GM12878 (cell line): ENCODE measurements at regions of chr4 and their contacts with region 1.

Region 1: GRCh38 chr4:87006676-87007527 is 72.1 kb downstream of the AFF1 start:
- DNase-seq: peak; percentile 71
- ATAC-seq: peak; percentile 82
- H3K4me3 ChIP-seq: peak overlapping the region; percentile 78
- H3K27ac ChIP-seq: peak overlapping the region; percentile 93
- H3K4me1 ChIP-seq: peaks cover 17% of the 10 kb centered on the region
- H3K27me3 ChIP-seq: no peaks in the 10 kb centered on the region
- CTCF ChIP-seq: peak in 2 of 3 experiments; percentile 33 to 34; a peak in 3 of 6 replicates
- EP300 ChIP-seq: 0 out of 4 replicates have a peak, but pooled peaks of 1 of the 2 experiments have one; percentile 17
- POLR2A ChIP-seq: peak; percentile 97
- RAD21 ChIP-seq: no peak

Region 2: DNA sequence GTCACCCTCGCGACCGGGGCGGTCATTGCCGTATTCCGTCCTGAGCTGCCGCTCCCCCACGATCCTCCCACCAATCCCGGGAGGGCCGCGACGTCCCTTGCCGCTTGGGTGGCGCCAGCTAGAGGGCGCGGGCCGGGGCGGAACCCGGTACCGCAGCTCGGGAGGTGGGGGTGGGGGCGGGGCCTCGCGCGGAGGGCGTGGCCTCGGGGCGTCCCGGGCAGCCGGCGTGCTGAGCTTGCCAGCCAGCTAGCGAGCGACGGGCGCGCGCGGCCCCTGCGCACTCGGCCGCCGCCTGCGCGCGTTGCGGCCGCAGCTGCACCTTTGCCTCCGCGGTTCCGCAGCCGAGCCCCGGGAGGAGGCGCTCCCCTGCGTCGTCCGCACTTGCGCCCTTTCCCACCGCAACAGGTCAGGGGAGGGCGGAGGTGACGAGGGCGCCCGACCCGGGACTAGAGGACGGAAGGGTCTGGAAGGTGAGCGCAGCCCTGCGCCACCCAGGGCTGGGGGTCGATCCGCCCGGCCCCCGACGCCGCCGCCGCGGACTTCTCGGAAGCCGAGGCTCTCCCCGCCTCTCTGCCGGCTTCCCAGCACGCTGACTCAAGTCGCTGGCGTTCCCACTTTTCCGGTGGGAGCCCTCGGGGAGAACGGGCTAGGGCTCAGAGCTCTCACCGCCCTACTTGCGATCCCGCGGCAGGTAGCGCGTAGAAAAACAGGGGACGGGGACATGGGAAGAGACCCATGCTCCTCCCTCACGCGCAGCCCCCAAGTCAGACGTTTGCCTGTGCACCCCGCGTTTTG is 71.9 kb before region 1 on chr4 and contains the start of gene AFF1:
- CTCF ChIA-PET with region 1: interaction called, 38 read pairs
- POLR2A ChIA-PET with region 1: interaction called, 123 read pairs
- RAD21 ChIA-PET with region 1: interaction called, 267 read pairs
- SMC1A ChIA-PET with region 1: interaction called, 268 read pairs
- in situ Hi-C with region 1: loop called (anchors 5 kb)
- intact Hi-C with region 1: loop called (anchors 1 kb)
- DNase-seq: peak; percentile 71
- ATAC-seq: peak; percentile 72
- H3K4me3 ChIP-seq: peak within 1 kb of the TSS; percentile 91
- H3K27ac ChIP-seq: peak within 1 kb of the TSS; percentile 93
- H3K4me1 ChIP-seq: peaks cover 3% of the 10 kb centered on the region; the same call in 1 of the 2 replicates
- H3K27me3 ChIP-seq: no peaks in the 10 kb centered on the region
- CTCF ChIP-seq: peak in 2 of 3 experiments; percentile 30 to 32; a peak in 4 of 6 replicates
- EP300 ChIP-seq: no peak
- POLR2A ChIP-seq: peak; percentile 96
- RAD21 ChIP-seq: peak; percentile 17; the same call in 1 of the 2 replicates
- polyA plus RNA-seq, gene AFF1: 3.5 to 11.4 TPM

Region 3: DNA sequence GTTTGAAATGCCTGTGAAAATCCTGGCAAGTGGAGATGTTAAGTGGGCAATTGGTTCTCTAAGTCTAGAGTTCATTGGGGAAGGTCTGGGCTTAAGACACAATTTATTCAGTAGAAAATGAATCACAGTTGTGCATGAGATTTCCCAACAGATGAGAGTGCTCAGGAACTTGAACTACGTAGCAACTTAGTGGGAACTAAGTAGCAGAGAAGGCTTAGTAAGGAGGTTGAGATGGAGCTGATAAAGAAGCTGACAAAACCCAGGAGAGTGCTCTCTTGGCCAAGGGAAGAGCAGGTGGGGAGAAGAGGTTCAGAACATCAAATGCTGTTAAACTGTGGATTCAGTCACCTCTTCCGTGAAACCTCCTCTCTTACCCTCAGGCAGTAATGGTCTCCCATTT is 39.1 kb before region 1 on chr4:
- CTCF ChIA-PET with region 1: interaction called, 3 read pairs
- POLR2A ChIA-PET with region 1: interaction called, 13 read pairs
- RAD21 ChIA-PET with region 1: interaction called, 22 read pairs
- SMC1A ChIA-PET with region 1: interaction called, 107 read pairs
- in situ Hi-C with region 1: no loop called
- intact Hi-C with region 1: no loop called
- DNase-seq: no peak
- ATAC-seq: no peak
- H3K4me3 ChIP-seq: no peak overlapping the region
- H3K27ac ChIP-seq: no peak overlapping the region
- H3K4me1 ChIP-seq: peaks cover 39% of the 10 kb centered on the region
- H3K27me3 ChIP-seq: no peaks in the 10 kb centered on the region
- CTCF ChIP-seq: no peak
- EP300 ChIP-seq: no peak
- POLR2A ChIP-seq: no peak
- RAD21 ChIP-seq: no peak

Region 4: DNA sequence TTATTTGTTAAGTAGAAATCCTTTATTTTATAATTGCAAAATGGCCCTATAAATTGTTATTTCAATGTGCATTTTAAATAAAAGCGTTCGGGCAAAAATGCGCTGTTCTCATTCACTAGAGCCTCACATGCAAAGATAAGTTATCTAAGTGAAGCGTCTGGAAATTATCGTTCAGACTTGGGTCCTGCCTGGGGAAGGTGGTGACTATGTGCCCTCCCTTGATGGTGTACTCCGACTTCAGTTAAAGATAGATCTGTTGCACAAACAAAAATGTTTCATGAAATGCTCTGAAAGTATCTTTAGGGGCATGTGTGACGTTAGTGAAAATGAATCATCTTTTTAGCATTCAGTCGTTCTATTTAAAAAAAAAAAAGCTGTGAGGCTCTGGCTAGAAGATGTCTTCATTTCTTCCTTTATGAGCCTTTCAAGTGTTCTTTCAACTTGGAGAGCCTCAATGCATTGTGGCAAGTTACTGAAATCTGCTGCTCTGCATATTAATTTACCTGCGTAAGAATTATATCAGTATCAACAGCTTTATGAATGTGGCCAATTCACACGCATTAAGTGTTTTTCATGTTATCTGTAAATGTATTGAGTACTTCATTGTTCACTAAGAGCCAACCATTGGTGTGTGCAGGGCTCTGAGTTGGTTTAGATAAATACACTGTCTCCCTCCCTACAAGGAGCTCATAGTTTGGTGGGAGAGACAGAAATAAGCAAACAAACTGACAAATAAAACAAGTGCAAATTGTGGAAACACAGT is 10.9 kb after region 1 on chr4:
- CTCF ChIA-PET with region 1: interaction called, 7 read pairs
- POLR2A ChIA-PET with region 1: interaction called, 18 read pairs
- RAD21 ChIA-PET with region 1: interaction called, 13 read pairs
- SMC1A ChIA-PET with region 1: interaction called, 26 read pairs
- in situ Hi-C with region 1: no loop called
- intact Hi-C with region 1: no loop called
- DNase-seq: no peak
- ATAC-seq: no peak
- H3K4me3 ChIP-seq: no peak overlapping the region
- H3K27ac ChIP-seq: peak overlapping the region; percentile 78; the same call in 1 of the 2 replicates
- H3K4me1 ChIP-seq: peaks cover 46% of the 10 kb centered on the region
- H3K27me3 ChIP-seq: no peaks in the 10 kb centered on the region
- CTCF ChIP-seq: no peak
- EP300 ChIP-seq: no peak
- POLR2A ChIP-seq: no peak
- RAD21 ChIP-seq: no peak

Region 5: DNA sequence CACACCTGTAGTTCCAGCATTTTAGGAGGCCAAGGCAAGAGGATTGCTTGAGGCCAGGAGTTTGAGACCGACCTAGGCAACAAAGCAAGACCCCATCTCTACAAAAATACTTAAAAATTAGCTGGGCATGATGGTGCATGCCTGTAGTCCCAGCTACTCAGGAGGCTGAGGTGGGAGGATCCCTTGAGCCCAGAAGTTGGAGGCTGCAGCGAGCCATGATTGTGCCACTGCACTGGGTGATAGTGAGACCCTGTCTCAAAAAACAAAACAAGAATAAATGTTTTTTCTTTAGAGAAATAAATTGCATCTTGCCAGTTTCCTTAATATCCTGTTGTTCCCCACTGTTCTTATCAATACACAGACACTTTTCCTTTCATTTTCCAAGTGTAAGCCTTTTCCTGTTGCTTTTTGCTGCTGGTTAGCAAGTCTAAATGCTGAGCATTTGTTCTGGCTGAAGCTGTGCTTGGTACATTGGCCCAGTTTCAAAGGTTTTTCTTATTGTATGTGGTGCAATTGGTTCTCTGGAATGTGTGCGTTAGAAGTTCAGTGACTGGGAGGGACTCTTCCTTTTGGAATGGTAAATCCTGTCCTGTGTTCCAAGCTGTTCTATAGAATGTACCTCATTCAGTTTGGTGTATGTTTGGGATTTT is 26.1 kb after region 1 on chr4:
- CTCF ChIA-PET with region 1: interaction called, 4 read pairs
- POLR2A ChIA-PET with region 1: interaction called, 4 read pairs
- RAD21 ChIA-PET with region 1: interaction called, 13 read pairs
- SMC1A ChIA-PET with region 1: interaction called, 20 read pairs
- in situ Hi-C with region 1: no loop called
- intact Hi-C with region 1: no loop called
- DNase-seq: no peak
- ATAC-seq: no peak
- H3K4me3 ChIP-seq: no peak overlapping the region
- H3K27ac ChIP-seq: peak overlapping the region; percentile 11; the same call in 1 of the 2 replicates
- H3K4me1 ChIP-seq: peaks cover 52% of the 10 kb centered on the region
- H3K27me3 ChIP-seq: no peaks in the 10 kb centered on the region
- CTCF ChIP-seq: no peak
- EP300 ChIP-seq: no peak
- POLR2A ChIP-seq: no peak
- RAD21 ChIP-seq: no peak

Region 6: DNA sequence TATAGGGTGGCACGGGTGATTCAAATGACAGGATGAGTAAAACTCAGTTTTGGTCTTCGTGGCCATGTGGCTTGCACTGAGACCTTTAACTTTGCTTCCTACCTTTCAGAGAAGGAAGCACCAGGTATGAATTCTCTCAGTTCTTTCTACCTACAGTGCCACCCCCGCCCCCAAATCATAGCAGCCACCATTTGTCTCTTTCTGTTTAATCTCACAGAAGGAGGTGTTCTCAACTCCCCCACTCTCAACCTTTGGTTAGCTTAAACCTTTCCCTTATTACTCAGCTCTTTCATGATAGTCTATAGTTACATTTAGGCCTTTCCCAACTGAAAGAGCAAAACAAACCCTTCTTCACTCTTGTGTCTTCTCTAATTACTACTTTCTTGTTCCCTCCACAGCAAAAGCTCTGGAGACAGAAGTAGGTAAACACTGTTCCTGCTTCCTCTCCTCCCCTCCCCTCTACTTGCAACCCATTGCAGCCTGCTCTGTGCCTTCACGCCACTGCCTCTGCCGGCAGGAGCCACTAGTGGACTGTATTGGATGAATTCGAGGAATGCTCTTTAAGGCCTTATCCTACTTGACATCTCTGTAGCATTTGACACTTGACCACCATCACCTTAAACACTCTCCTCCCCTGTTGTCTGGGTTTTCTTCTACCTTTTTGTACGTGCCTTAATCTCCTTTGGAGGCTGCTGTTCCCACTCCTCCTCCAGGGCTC is 51.6 kb after region 1 on chr4:
- CTCF ChIA-PET with region 1: interaction called, 3 read pairs
- POLR2A ChIA-PET with region 1: interaction called, 8 read pairs
- RAD21 ChIA-PET with region 1: interaction called, 8 read pairs
- SMC1A ChIA-PET with region 1: interaction called, 34 read pairs
- in situ Hi-C with region 1: no loop called
- intact Hi-C with region 1: no loop called
- DNase-seq: no peak
- ATAC-seq: peak; percentile 56
- H3K4me3 ChIP-seq: no peak overlapping the region
- H3K27ac ChIP-seq: peak overlapping the region; percentile 4; the same call in 1 of the 2 replicates
- H3K4me1 ChIP-seq: peaks cover 37% of the 10 kb centered on the region
- H3K27me3 ChIP-seq: no peaks in the 10 kb centered on the region
- CTCF ChIP-seq: no peak; a peak in 1 of 6 replicates
- EP300 ChIP-seq: no peak
- POLR2A ChIP-seq: no peak
- RAD21 ChIP-seq: peak; percentile 43; the same call in 1 of the 2 replicates

Region 7: DNA sequence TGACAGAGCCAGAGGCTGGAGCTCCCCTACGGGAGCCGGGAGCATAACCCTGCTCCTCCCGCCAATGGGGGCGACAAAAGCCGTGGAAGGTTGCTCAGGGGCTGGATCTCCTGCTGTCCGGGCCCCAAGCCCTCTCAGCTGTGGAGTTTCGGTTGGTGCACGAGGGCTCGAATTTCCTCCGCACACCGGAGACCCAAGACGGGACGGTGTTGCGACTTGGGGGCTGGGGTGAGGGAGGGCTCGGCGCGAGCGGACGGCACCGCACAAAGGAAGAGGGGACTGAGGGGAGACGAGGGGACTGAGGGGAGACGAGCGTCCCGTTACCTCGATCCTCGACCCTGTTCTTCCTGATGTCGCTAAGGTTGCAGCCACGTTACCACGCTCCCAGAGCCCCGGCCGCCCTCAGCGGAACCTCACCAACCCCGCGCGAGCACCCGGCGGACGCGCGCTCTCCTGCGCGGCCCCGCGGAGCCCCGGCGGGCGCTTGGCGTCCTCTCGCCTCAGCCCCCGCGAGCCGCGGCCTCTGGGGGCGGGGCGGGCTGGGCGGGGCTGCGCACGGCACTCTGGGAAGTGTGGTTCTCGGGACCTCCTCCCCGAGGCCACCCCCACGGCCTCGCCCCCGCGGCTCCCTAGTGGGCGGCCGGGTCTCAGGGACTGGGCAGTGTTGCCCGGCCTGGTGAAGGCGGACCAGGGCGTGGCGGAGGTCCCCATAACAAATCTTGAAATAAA is 213.4 kb after region 1 on chr4 and contains the start of gene KLHL8:
- CTCF ChIA-PET with region 1: no interaction called
- POLR2A ChIA-PET with region 1: interaction called, 3 read pairs
- RAD21 ChIA-PET with region 1: interaction called, 3 read pairs
- SMC1A ChIA-PET with region 1: no interaction called
- in situ Hi-C with region 1: no loop called
- intact Hi-C with region 1: loop called (anchors 5 kb)
- DNase-seq: peak; percentile 40
- ATAC-seq: peak; percentile 96
- H3K4me3 ChIP-seq: peak within 1 kb of the TSS; percentile 100
- H3K27ac ChIP-seq: peak within 1 kb of the TSS; percentile 93
- H3K4me1 ChIP-seq: no peaks in the 10 kb centered on the region; the same call in 1 of the 2 replicates
- H3K27me3 ChIP-seq: no peaks in the 10 kb centered on the region; a peak in 1 of 4 replicates
- CTCF ChIP-seq: peak in 2 of 3 experiments; percentile 11 to 17; a peak in 3 of 6 replicates
- EP300 ChIP-seq: no peak
- POLR2A ChIP-seq: peak; percentile 97
- RAD21 ChIP-seq: no peak
- polyA plus RNA-seq, gene KLHL8: 4.5 to 5.1 TPM